GM12878 (cell line): ENCODE measurements at regions of chr1 and their contacts with region 1.

Region 1: DNA sequence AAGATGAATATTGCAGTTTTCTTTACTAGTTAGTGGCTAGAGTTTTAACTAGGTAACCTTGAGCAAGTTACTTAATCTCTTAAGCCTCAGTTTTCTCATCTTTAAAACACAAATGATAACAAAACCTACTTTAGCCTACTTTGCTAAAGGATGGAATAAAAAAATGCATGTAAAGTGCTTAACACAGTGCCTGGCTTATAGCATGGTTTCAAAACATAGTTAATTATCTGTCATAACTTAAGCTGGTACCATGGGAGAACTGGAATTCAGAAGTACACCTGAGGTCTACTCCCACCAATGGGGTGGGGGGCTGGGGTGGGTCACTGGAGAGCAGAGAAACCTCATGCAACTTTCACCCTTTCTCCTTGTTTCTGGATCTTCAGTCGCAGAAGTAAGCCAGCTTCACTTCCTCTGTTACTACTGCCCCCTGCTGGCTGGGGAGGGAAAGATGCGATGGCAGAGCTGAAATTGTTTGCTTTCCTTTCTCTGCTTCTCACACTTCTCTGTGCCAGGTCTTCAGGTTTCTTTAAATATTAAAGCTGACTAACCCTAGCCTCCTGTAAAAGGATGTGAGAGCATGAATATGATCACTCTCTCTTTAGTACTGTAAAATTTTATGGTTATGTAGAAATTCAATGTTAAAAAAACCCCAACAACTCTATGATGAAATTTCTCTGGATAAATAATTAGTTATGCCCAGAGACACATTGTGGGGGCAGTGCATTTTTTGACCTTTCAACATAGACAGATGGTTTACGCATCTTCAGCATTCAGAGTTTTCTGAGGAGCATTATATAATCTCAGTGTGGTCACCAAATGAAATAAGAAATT is 324.2 kb downstream of the HLX start:
- DNase-seq: peak; percentile 30
- ATAC-seq: peak; percentile 87
- H3K4me3 ChIP-seq: no peak overlapping the region
- H3K27ac ChIP-seq: no peak overlapping the region
- H3K4me1 ChIP-seq: no peaks in the 10 kb centered on the region
- H3K27me3 ChIP-seq: no peaks in the 10 kb centered on the region
- CTCF ChIP-seq: peak; percentile 80 to 93 (median 90)
- EP300 ChIP-seq: no peak
- POLR2A ChIP-seq: no peak
- RAD21 ChIP-seq: peak; percentile 98

Region 2: DNA sequence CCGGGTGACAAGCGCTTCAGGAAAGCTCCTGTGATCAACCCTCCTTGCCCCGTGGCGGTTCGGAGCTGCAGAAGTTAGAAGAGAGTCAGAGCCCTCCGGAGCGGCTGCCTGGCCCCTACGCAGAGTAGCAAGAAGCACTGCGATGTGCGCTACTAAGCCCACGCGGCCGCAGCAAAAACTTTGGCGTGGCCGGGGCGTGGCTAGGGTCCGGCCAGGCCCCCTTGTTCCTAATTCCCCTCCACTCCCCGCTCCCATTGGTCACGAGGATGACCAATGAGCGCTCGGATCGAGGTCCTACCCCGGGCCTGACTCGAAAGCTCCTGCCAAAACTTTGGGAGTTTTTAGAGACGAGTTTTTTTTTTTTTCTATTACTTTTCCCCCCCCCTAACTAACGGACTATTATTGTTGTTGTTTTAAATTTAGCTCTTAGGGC is 324.3 kb before region 1 on chr1 and contains the start of gene HLX:
- CTCF ChIA-PET with region 1: interaction called, 134 read pairs
- POLR2A ChIA-PET with region 1: no interaction called
- RAD21 ChIA-PET with region 1: interaction called, 44 read pairs
- SMC1A ChIA-PET with region 1: interaction called, 94 read pairs
- in situ Hi-C with region 1: loop called (anchors 5 kb)
- intact Hi-C with region 1: loop called (anchors 1 kb)
- DNase-seq: no peak
- ATAC-seq: peak; percentile 82
- H3K4me3 ChIP-seq: peak within 1 kb of the TSS; percentile 68
- H3K27ac ChIP-seq: no peak within 1 kb of the TSS
- H3K4me1 ChIP-seq: peaks cover 15% of the 10 kb centered on the region
- H3K27me3 ChIP-seq: peaks cover 0 to 17% of the 10 kb centered on the region in 2 experiments; a peak in 3 of 4 replicates
- CTCF ChIP-seq: no peak
- EP300 ChIP-seq: no peak
- POLR2A ChIP-seq: no peak
- RAD21 ChIP-seq: no peak
- polyA plus RNA-seq, gene HLX: 0.11 to 0.22 TPM

Region 3: DNA sequence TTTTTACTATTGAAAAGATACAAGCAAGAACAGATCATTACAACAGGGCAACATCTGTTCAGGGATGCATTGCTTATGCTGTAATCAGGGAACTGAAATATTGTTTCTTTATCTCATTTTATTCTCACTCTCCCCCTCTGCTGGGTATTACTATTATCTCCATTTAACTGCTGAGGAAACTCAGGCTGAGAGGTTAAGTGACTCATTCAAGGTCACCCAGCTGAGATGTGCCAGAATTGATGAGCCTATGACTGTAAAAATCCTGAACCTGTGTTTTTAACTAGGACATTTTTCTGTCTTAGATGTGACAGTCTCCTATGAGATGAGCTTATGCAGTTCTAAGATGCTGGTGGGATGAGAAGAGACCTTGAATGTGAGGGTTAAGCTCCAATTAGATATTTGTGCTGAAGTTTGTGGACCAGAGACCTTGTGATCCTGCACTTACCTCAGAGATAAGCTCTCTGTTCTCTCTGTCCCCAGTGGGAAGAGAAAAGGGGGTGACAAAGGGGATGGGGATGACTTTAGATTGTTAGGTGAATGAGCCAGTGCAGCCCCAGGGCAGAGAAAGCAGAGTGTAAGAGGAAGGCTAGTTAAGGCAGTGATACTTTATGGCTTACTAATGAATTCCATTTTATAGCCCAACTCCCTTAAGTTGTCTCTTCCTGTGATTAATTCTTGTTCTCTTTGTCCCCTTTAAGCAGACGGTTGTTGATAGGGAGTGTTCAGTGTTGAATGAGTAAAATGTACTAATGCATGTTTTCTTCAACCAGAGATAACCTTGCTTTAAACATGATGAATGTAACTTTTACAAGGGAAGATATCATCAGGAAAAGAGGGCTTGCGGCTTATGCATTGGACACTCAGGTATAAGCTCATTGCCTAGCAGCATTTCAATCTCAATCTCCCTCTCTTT is 212.8 kb before region 1 on chr1:
- CTCF ChIA-PET with region 1: interaction called, 3 read pairs
- POLR2A ChIA-PET with region 1: no interaction called
- RAD21 ChIA-PET with region 1: interaction called, 4 read pairs
- SMC1A ChIA-PET with region 1: interaction called, 18 read pairs
- in situ Hi-C with region 1: no loop called
- intact Hi-C with region 1: no loop called
- DNase-seq: no peak
- ATAC-seq: no peak; the same call in 1 of the 3 replicates
- H3K4me3 ChIP-seq: no peak overlapping the region
- H3K27ac ChIP-seq: no peak overlapping the region
- H3K4me1 ChIP-seq: no peaks in the 10 kb centered on the region
- H3K27me3 ChIP-seq: no peaks in the 10 kb centered on the region
- CTCF ChIP-seq: no peak
- EP300 ChIP-seq: no peak
- POLR2A ChIP-seq: no peak
- RAD21 ChIP-seq: no peak

Region 4: GRCh38 chr1:221069178-221069903 is 134.1 kb before region 1 on chr1:
- CTCF ChIA-PET with region 1: interaction called, 12 read pairs
- POLR2A ChIA-PET with region 1: no interaction called
- RAD21 ChIA-PET with region 1: interaction called, 30 read pairs
- SMC1A ChIA-PET with region 1: interaction called, 19 read pairs
- in situ Hi-C with region 1: no loop called
- intact Hi-C with region 1: loop called (anchors 2 kb)
- DNase-seq: peak; percentile 87
- ATAC-seq: peak; percentile 93
- H3K4me3 ChIP-seq: peak overlapping the region; percentile 1; the same call in 1 of the 2 replicates
- H3K27ac ChIP-seq: peak overlapping the region; percentile 89
- H3K4me1 ChIP-seq: peaks cover 33% of the 10 kb centered on the region
- H3K27me3 ChIP-seq: no peaks in the 10 kb centered on the region
- CTCF ChIP-seq: no peak
- EP300 ChIP-seq: peak; percentile 92 to 94
- POLR2A ChIP-seq: no peak
- RAD21 ChIP-seq: no peak

Region 5: DNA sequence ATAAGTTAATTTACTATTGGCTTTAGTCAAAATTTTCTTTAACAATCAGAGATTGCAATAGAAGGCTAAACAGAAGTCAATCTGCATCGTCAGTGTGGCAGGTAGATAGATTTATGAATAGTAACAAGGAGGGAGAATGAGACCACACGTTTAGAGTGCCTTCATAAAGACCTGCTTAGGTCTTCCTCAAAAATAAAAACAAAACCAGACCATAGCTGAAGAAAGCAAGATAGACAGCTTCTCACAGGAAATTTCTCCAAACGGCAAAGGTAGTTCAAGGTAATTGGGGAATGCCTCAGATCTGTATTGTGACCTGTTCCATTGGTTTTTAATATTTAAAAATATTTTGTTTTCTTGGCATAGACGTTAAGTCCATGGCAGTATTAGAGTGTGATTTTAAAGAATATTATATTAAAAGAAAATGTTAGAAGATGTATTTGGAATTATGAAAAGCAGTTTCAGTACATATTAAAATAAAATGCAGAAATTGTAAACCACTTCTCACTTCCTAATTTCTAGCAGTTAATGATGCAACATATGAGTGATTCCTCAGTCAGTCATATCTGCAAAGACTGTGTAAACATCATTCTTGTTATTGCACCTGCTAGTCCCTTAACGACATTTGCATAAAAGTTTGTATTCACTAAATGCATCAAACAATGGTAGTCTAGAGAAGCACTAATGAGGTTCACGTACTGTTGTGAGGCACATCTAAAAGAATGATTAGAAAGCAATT is 46.2 kb before region 1 on chr1:
- CTCF ChIA-PET with region 1: interaction called, 9 read pairs
- POLR2A ChIA-PET with region 1: no interaction called
- RAD21 ChIA-PET with region 1: interaction called, 10 read pairs
- SMC1A ChIA-PET with region 1: interaction called, 34 read pairs
- in situ Hi-C with region 1: no loop called
- intact Hi-C with region 1: no loop called
- DNase-seq: peak; percentile 41
- ATAC-seq: peak; percentile 98
- H3K4me3 ChIP-seq: no peak overlapping the region
- H3K27ac ChIP-seq: no peak overlapping the region
- H3K4me1 ChIP-seq: no peaks in the 10 kb centered on the region; the same call in 1 of the 2 replicates
- H3K27me3 ChIP-seq: no peaks in the 10 kb centered on the region
- CTCF ChIP-seq: no peak
- EP300 ChIP-seq: peak; percentile 97
- POLR2A ChIP-seq: no peak
- RAD21 ChIP-seq: no peak

Region 6: GRCh38 chr1:221180704-221181368 is 22.6 kb before region 1 on chr1:
- CTCF ChIA-PET with region 1: interaction called, 11 read pairs
- POLR2A ChIA-PET with region 1: no interaction called
- RAD21 ChIA-PET with region 1: interaction called, 17 read pairs
- SMC1A ChIA-PET with region 1: interaction called, 28 read pairs
- in situ Hi-C with region 1: no loop called
- intact Hi-C with region 1: no loop called
- DNase-seq: no peak
- ATAC-seq: no peak
- H3K4me3 ChIP-seq: no peak overlapping the region
- H3K27ac ChIP-seq: no peak overlapping the region
- H3K4me1 ChIP-seq: no peaks in the 10 kb centered on the region
- H3K27me3 ChIP-seq: no peaks in the 10 kb centered on the region
- CTCF ChIP-seq: no peak
- EP300 ChIP-seq: no peak
- POLR2A ChIP-seq: no peak
- RAD21 ChIP-seq: no peak